ENCODE measurements at regions of chr1 and their contacts with region 1.

Region 1: GRCh38 chr1:24586970-24587820 is 31.3 kb downstream of the NCMAP start:
- DNase-seq: peak; percentile 76

Region 2: GRCh38 chr1:24541711-24542346 is 45.4 kb before region 1 on chr1:
- CTCF ChIA-PET with region 1: interaction called, 17 read pairs
- POLR2A ChIA-PET with region 1: no interaction called
- DNase-seq: no peak

Region 3: GRCh38 chr1:24575915-24576587 is 11.1 kb before region 1 on chr1:
- CTCF ChIA-PET with region 1: interaction called, 18 read pairs
- POLR2A ChIA-PET with region 1: no interaction called
- DNase-seq: no peak

Measured in HEK293T (cell line).